Activated CD8-positive, alpha-beta memory T cell treated with anti-CD3 and anti-CD28 coated beads, Interleukin-2, amount 10 ng/mL, durations not matched to agents 7 days and 5 days (primary cell): ENCODE measurements at regions of chr1 and their contacts with region 1.

Region 1: DNA sequence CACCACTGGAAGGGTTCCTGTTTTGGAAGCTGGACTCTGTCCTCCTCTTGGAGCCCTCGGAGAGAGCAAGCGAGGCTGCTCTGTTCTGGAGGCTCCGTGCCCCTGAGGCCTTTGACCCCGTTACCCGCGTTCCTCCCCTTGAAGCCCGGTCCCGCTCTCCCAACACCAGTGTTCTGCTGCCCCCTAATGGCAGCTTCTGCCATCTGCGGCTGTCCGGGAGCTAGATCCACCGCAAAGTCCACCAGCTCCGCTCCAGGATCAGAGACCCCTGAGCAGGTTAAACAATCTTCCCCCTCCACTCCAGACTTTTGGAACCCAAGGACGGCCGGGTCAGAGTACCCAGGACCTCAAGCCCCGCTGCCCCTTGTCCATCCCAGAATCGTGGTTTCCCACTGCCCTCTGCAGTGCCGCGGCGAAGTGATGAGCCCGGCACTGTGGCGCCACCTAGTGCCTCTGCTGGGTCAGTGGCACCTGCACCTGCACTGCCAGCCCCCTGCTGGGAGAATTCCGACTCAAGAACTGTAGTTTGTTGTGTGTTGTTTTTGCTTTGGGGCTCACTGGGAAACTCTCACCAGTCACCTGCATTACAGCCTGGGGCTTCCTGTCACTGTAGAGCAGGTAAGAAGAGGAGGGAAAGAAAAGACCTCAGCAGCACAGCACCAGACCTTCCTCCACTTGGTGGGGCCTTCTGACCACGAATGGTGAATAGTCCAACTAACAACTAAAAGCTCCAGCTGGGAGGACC is 63.5 kb upstream of the NFASC start:
- DNase-seq: peak; percentile 91
- ATAC-seq: peak; percentile 95
- H3K4me3 Mint-ChIP-seq: peak overlapping the region; percentile 84
- H3K27ac Mint-ChIP-seq: peak overlapping the region; percentile 79
- H3K4me1 Mint-ChIP-seq: peaks cover 19% of the 10 kb centered on the region
- H3K27me3 Mint-ChIP-seq: peaks cover 6% of the 10 kb centered on the region

Region 2: DNA sequence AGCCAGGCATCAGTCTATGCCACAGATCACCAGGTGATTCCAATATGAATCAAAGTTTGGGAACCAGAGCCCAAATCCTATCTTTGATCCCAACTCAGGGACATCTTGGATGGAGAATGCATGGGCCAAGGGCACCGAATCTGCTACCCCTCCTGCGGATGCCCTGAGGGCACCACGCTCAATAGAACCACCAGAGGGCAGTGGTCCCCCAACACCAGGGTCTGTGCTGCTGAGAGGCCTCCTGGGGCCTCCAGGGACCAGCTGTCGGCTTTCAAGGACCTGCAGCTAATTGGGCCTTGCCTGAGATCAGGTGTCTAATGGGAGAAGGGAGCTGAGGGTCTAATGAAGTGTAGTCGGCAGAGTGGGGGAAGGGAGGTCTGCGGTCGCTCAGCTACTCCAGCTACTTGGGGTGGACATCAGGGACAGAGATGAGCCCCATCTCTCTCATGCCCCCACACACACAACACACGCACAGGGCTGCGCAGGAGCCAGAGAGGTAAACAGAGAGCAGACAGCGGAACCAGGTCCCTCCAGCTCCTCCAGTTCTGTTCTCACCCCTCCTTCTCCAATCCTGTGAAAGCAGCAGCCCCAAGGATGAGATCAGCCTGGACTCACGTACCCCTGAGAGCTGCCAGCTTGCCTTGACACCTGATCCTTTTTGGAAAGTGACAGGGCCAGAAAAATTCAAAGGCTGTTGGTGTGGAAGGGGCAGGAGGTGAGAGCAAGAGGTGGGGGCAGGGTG is 360.6 kb before region 1 on chr1:
- CTCF ChIA-PET with region 1: interaction called, 18 read pairs
- DNase-seq: peak; percentile 84
- ATAC-seq: peak; percentile 93
- H3K4me3 Mint-ChIP-seq: no peak overlapping the region
- H3K27ac Mint-ChIP-seq: peak overlapping the region; percentile 74
- H3K4me1 Mint-ChIP-seq: peaks cover 33% of the 10 kb centered on the region
- H3K27me3 Mint-ChIP-seq: no peaks in the 10 kb centered on the region

Region 3: GRCh38 chr1:204516180-204516879 is 290.8 kb before region 1 on chr1 and contains the start of gene MDM4:
- CTCF ChIA-PET with region 1: interaction called, 12 read pairs
- DNase-seq: peak; percentile 97
- ATAC-seq: peak; percentile 87
- H3K4me3 Mint-ChIP-seq: no peak within 1 kb of the TSS
- H3K27ac Mint-ChIP-seq: peak within 1 kb of the TSS; percentile 52
- H3K4me1 Mint-ChIP-seq: peaks cover 56% of the 10 kb centered on the region
- H3K27me3 Mint-ChIP-seq: no peaks in the 10 kb centered on the region
- total RNA-seq, gene MDM4: 74.7 to 100.0 TPM

Region 4: DNA sequence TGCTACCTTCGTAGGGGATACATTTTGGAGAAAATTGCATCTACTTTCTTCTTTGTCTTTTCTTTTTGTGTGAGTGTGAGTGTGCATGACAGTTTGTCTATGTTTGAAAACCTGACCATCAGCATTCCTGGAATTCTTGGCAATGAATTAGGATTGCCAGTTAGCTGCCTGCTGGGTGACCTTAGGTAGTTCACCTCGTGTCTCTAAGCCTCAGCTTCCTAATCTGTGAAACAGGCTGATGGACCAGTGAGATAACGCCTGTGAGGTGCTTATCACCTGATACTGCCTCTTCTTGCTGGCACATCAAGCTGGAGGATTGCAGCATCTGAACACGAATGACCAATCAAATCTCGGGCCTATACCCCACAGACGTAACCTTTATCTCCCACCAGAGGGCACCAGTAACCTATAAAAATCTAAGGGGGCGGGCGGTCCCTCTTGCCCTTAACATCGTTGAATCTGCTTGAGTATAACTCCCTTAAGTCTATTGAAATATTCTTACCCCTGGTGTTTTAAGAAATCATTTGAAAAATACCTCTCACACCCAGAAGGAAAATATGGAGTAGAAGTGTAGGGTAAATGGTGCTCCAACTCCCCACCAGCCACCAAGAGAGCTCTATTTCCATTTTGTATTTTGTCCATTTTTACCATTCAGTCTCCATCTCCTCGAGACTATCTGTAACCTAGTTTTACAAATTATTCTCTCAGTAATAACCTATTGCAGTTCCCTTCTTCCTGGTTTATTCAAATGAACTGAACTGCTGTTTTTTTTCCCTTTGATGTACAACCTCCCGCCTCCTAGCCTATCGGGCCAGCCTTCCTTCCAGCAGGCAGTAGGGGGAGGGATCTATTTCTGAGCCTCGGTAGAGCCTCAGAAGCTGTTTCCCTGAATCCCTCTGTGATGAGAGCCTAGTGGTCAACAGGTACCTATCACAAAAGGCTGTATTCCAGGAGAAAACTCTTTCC is 241.2 kb before region 1 on chr1:
- CTCF ChIA-PET with region 1: interaction called, 121 read pairs
- DNase-seq: peak; percentile 80
- ATAC-seq: peak; percentile 86
- H3K4me3 Mint-ChIP-seq: no peak overlapping the region
- H3K27ac Mint-ChIP-seq: peak overlapping the region; percentile 72
- H3K4me1 Mint-ChIP-seq: peaks cover 48% of the 10 kb centered on the region
- H3K27me3 Mint-ChIP-seq: no peaks in the 10 kb centered on the region

Region 5: DNA sequence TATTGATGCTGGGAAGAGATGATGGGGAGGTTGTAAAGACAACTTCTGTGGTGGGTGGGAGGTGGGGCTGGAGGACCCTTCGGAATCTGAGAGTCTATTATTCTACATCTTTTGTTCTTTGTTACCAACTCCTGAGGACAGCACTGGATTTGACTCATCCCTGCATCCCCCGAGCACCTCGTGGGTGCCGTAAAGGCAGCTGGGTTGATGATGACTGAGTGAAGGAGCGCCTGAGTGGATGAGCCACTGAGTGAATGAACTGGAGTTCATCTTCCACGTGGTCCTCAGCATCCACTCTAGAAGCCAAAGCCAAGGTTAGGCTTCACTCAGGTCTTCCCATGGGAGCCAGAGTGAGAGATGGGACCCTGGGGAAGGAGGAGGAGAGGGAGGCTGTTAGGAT is 199.2 kb before region 1 on chr1:
- CTCF ChIA-PET with region 1: interaction called, 11 read pairs
- DNase-seq: no peak
- ATAC-seq: no peak
- H3K4me3 Mint-ChIP-seq: no peak overlapping the region
- H3K27ac Mint-ChIP-seq: no peak overlapping the region
- H3K4me1 Mint-ChIP-seq: no peaks in the 10 kb centered on the region
- H3K27me3 Mint-ChIP-seq: peaks cover 7% of the 10 kb centered on the region

Region 6: DNA sequence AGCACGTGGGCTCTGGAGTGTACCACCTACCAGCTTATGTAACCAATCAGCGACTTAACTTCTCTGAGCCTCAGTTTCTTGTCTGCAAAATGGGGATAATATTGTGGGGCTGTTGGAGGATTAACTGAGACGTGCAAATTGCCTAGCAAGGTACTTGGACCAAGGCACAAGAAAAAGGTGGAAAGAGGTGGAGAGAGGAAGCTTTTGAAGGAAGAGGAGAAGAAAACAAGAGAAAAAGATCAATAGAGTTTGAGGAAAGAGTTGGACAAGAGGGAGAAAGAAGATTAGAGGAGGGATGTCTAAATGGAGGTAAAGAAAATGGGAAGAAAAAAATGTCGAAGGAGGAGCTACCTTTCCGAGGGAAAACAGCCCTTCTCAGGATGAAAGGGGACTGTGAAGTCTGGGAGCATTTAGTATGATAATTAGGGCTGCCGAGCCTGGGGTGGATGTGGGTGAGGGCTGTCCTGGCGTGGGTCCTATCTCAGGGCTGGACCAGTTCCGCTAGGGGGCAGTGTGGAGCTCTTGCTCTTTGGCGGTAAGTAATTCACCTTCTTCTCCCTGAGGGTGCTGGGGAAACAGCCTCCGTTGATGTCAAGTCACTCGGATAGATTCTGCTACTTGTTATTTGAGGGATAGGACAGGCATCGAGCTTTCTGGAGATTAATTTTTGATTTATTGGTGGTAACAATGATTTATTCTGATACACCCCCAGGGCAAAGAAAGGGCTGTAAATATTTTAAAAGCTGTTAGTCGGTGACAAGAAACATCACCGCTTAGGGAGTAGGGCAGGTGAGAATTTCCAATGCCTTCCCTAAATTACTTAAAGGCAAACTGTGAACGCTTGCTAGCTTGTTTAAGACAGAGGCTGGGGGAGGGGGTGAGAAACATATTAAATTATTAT is 15.4 kb before region 1 on chr1:
- CTCF ChIA-PET with region 1: interaction called, 123 read pairs
- DNase-seq: peak; percentile 85
- ATAC-seq: peak; percentile 67
- H3K4me3 Mint-ChIP-seq: no peak overlapping the region
- H3K27ac Mint-ChIP-seq: no peak overlapping the region
- H3K4me1 Mint-ChIP-seq: no peaks in the 10 kb centered on the region
- H3K27me3 Mint-ChIP-seq: peaks cover 42% of the 10 kb centered on the region

Region 7: DNA sequence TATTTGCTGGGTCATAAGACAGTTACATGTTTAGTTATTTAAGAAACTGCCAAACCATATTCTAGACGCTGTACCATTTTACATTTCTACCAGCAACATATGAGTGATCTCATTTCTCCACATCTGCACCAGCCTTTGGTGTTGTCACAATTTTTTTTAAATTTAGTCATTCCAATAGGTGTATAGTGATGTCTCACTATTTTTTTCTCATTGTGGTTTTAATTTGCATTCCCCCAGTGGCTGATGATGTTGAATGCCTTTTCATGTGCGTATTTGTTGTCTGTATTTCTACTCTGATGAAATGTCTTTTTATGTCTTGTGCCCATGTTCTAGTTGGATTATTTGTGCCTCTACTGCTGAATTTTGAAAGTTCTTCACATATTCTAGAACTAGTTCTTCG is 102.0 kb after region 1 on chr1:
- CTCF ChIA-PET with region 1: no interaction called
- DNase-seq: no peak
- ATAC-seq: no peak
- H3K4me3 Mint-ChIP-seq: no peak overlapping the region
- H3K27ac Mint-ChIP-seq: no peak overlapping the region
- H3K4me1 Mint-ChIP-seq: no peaks in the 10 kb centered on the region
- H3K27me3 Mint-ChIP-seq: peaks cover 53% of the 10 kb centered on the region

Region 8: GRCh38 chr1:204941421-204942338 is 134.6 kb after region 1 on chr1:
- CTCF ChIA-PET with region 1: interaction called, 11 read pairs
- DNase-seq: peak; percentile 72
- ATAC-seq: peak; percentile 63
- H3K4me3 Mint-ChIP-seq: no peak overlapping the region
- H3K27ac Mint-ChIP-seq: no peak overlapping the region
- H3K4me1 Mint-ChIP-seq: peaks cover 5% of the 10 kb centered on the region
- H3K27me3 Mint-ChIP-seq: peaks cover 17% of the 10 kb centered on the region